Dorsolateral prefrontal cortex (tissue), 120 donors: ENCODE measurements at regions of chr18 and their contacts with region 1.

Region 1: GRCh38 chr18:52636536-52636935 is 296.5 kb downstream of the DCC start:
- DNase-seq: no peak
- H3K4me3 ChIP-seq: no peak overlapping the region
- H3K27ac ChIP-seq: no peak overlapping the region
- H3K27me3 ChIP-seq: no peaks in the 10 kb centered on the region
- CTCF ChIP-seq: no peak

Region 2: GRCh38 chr18:52607985-52608384 is 28.6 kb before region 1 on chr18:
- intact Hi-C with region 1: loop called in 1 of 2 experiments (anchors 2 kb)
- DNase-seq: no peak
- H3K4me3 ChIP-seq: no peak overlapping the region
- H3K27ac ChIP-seq: no peak overlapping the region
- H3K27me3 ChIP-seq: no peaks in the 10 kb centered on the region
- CTCF ChIP-seq: no peak